Gastrocnemius medialis (tissue), 4 donors: ENCODE measurements at regions of chr1 and their contacts with region 1.

Region 1: DNA sequence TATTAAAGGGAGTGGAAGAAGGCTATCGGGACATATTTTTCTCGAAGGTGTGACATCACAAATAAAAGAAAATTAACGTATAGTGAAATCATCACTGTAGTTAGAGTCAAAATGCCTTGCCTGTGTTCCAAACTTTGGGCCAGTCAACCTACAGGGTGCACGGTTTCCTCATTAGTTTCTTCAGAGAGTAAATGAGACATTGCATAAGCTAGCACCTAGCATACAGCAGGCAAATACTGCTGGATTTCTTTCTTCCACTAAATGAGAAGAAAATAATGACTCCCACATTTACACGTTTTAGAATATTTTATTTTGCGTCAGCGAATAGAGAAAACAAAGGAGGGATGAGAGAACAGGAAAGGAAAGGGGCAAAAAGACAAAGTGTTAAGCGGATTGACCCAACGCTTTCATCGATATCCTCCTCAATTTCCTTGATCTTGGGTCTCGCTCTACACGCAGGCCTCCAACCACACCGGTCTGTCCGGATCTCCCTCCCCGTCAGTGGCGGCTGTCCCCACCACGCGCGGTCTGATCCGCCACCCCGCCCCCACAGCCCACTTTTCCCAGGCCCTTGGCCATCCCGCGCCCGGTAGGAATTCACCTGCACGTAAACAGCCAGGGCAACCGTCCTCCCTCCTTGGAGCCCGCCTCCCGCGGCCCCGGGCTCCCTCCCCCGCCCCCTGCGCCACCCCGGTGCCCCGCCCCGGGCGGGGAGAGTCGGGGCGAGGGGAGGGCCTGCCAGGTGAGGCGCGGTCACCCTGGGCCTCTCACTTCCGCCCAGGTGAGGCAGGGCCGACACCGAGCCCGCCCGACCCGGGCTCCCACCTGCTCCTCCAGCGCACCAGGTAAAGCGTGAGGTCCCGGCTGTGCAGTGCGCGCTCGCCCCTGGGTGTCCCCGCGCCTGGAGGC is at the start of gene PATJ:
- DNase-seq: peak; percentile 36 to 46
- ATAC-seq: peak; percentile 80 to 82
- H3K4me3 ChIP-seq: peak within 1 kb of the TSS; percentile 77 to 97 (median 82)
- H3K27ac ChIP-seq: peak within 1 kb of the TSS; percentile 86 to 95 (median 89)
- H3K4me1 ChIP-seq: peaks cover 20 to 22% of the 10 kb centered on the region in 2 donors
- H3K27me3 ChIP-seq: no peaks in the 10 kb centered on the region
- CTCF ChIP-seq: no peak
- POLR2A ChIP-seq: no peak
- total RNA-seq, gene PATJ: 19.3 to 44.8 (median 26.0) TPM

Region 2: DNA sequence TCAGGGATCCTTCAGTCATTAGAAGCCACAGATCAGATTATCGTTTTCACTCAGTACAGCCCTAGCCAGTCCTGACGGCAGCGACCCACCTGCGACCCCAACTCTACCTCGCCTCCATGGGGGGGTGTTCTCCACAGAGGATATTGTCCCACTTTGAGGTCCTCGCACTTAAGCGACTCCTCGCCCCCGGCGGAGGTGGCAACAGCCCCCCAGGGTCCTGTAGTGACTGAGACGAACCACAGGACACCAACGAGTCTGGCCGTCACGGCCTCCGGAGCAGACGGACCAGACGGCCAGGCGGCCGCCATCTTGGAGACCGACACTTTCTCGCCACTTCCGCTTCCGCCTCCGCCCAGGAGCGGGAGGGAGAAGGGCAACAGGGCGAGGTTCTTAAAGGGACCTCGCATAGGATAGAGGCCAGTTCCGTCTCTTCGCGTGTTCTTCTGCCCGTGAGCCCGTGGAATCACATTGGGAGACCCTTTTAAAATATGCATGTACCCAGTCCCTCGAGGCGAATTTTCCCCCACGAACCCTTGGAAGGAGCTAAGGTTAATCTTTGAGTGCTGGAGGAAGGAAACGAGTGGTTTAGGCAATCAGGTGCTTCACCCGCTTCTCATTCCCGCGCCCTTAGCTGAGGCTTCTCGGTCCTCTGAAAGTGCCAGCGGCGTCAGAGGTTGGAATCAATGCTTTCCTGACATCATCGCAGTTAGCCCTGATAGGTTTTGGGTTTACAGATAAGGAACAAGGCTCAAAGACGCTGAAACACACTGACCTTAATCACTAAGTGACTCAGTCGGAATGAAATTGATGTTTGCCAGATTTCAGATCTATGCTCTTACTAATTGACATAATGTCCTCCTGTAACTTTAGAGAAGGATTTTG is 16.9 kb before region 1 on chr1 and contains the start of gene TM2D1:
- in situ Hi-C with region 1: no loop called
- intact Hi-C with region 1: loop called (anchors 1 kb)
- DNase-seq: peak; percentile 81 to 85
- ATAC-seq: peak; percentile 99
- H3K4me3 ChIP-seq: peak within 1 kb of the TSS; percentile 86 to 98 (median 96)
- H3K27ac ChIP-seq: peak within 1 kb of the TSS; percentile 91 to 96 (median 94)
- H3K4me1 ChIP-seq: peaks cover 17 to 18% of the 10 kb centered on the region in 2 donors
- H3K27me3 ChIP-seq: no peaks in the 10 kb centered on the region
- CTCF ChIP-seq: no peak
- POLR2A ChIP-seq: peak; percentile 64 to 77
- total RNA-seq, gene TM2D1: 33.6 to 56.8 (median 38.5) TPM

Region 3: GRCh38 chr1:62436466-62437256 is 694.7 kb after region 1 on chr1 and contains the start of gene USP1:
- in situ Hi-C with region 1: no loop called
- intact Hi-C with region 1: loop called (anchors 2 kb)
- DNase-seq: peak; percentile 96 to 98
- ATAC-seq: peak; percentile 91 to 92
- H3K4me3 ChIP-seq: peak within 1 kb of the TSS; percentile 87 to 94 (median 92)
- H3K27ac ChIP-seq: peak within 1 kb of the TSS; percentile 94 to 99 (median 99)
- H3K4me1 ChIP-seq: peaks cover 22 to 32% of the 10 kb centered on the region in 2 donors
- H3K27me3 ChIP-seq: no peaks in the 10 kb centered on the region
- CTCF ChIP-seq: no peak
- POLR2A ChIP-seq: peak; percentile 54 to 77
- total RNA-seq, gene USP1: 11.8 to 23.4 (median 17.3) TPM